HepG2 (cell line): ENCODE measurements at regions of chr6 and their contacts with region 1.

Region 1: DNA sequence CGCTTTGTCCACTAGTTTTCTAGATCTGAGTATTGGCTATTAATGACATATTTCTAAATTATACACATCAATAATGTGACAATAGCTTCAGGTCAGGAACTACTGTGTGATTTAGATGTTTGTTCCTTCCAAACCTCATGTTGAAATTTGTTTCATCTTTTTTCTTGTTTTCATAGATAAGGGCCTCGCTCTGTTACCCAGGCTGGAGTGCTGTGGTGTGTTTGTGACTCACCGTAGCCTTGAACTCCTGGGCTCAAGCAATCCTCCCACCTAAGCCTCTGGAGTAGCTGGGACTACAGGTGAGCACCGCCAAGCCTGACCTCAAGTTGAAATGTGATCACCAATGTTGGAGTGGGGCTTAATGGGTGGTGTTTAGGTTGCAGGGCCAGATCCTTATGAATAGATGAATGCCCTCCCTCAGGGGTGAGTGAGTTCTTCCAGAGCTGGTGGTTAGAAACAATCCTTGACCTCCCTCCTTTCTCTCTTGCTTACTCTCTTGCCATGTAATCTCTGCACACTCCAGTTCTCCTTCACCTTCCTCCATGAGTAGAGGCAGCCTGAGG is 5.9 kb upstream of the NQO2 start:
- DNase-seq: peak; percentile 93
- ATAC-seq: peak; percentile 31
- H3K4me3 ChIP-seq: peak overlapping the region in 1 of 3 experiments; percentile 11; a peak in 1 of 6 replicates
- H3K27ac ChIP-seq: peak overlapping the region; percentile 22
- H3K4me1 ChIP-seq: peaks cover 53% of the 10 kb centered on the region
- H3K27me3 ChIP-seq: no peaks in the 10 kb centered on the region; a peak in 1 of 5 replicates
- CTCF ChIP-seq: peak; percentile 17; the same call in 1 of the 2 replicates
- EP300 ChIP-seq: peak in 1 of 2 experiments; percentile 94; a peak in 2 of 4 replicates
- POLR2A ChIP-seq: no peak
- RAD21 ChIP-seq: no peak

Region 2: DNA sequence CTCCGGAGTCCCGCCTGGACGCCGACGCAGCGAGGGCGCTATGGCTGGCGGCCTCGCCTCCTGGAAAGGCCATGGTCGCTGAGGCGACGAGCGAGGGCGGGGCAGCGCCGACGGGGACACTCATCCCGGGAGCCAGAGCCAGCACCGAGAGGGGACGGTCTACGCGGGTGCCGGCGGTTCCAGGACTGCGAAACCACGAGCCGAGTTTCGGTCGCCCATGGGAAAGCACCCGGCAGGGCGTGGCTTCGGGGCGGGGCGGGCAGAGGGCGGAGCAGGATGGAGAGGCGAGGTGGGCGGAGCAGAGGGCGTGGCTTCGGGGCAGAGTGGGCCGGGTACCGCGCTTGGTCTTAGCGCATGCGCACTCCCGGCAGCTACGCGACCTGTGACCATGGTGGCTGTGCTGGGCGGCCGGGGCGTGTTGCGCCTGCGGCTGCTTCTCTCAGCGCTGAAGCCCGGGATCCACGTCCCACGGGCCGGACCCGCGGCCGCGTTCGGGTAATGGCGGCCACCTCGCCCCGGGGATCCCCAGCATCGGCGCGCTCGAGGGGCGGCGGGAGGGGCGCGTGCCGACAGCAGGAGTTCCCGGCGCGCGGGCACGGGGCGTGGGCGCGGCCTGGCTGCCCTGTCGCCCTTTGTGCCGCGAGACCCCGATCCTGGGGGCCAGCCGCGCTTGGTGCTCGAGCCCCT is 124.7 kb after region 1 on chr6 and contains the start of gene BPHL:
- CTCF ChIA-PET with region 1: no interaction called
- POLR2A ChIA-PET with region 1: interaction called, 4 read pairs
- in situ Hi-C with region 1: no loop called
- intact Hi-C with region 1: loop called (anchors 2 kb)
- DNase-seq: peak; percentile 87
- ATAC-seq: peak; percentile 89
- H3K4me3 ChIP-seq: peak within 1 kb of the TSS; percentile 82 to 84 (median 84)
- H3K27ac ChIP-seq: peak within 1 kb of the TSS; percentile 88
- H3K4me1 ChIP-seq: peaks cover 35% of the 10 kb centered on the region
- H3K27me3 ChIP-seq: no peaks in the 10 kb centered on the region; a peak in 1 of 5 replicates
- CTCF ChIP-seq: peak; percentile 63
- EP300 ChIP-seq: no peak
- POLR2A ChIP-seq: peak; percentile 84 to 96
- RAD21 ChIP-seq: peak; percentile 67
- total RNA-seq, gene BPHL: 39.5 and 48.6 TPM in 2 replicates